Heart right ventricle (tissue), 16 donors: ENCODE measurements at regions of chr7 and their contacts with region 1.

Region 1: DNA sequence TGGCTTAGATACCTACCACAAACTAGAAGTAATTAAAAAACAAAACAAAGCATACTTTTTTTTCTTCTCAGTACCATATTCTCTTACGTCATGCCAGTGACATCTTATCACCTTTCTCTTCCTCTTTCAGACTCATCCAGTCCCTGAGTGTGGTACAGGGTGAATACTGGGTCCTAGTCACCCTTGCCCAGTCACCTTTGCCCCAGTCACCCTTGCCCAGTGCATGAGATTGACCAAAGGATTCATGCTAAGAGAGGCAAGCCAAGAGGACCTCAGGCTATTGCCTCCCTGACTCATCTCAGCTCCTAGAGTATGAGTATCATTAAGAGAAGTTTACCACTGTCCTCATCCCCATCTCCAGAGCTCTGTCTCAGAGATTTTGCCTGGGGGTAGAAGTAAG is 10.0 kb upstream of the TSPAN12 start:
- DNase-seq: no peak
- ATAC-seq: no peak
- H3K4me3 ChIP-seq: no peak overlapping the region
- H3K27ac ChIP-seq: no peak overlapping the region
- H3K4me1 ChIP-seq: peaks cover 0 to 22% (median 10%) of the 10 kb centered on the region in 9 donors
- H3K27me3 ChIP-seq: no peaks in the 10 kb centered on the region
- CTCF ChIP-seq: no peak

Region 2: GRCh38 chr7:120933475-120933874 is 65.5 kb after region 1 on chr7:
- intact Hi-C with region 1: loop called in 2 of 10 experiments (anchors 10 kb)
- DNase-seq: no peak
- ATAC-seq: peak in 3 of 8 donors; percentile 31 to 37 (median 33)
- H3K4me3 ChIP-seq: no peak overlapping the region
- H3K27ac ChIP-seq: no peak overlapping the region
- H3K4me1 ChIP-seq: peaks cover 0 to 10% (median 0%) of the 10 kb centered on the region in 9 donors
- H3K27me3 ChIP-seq: no peaks in the 10 kb centered on the region
- CTCF ChIP-seq: no peak